ENCODE measurements at regions of chr20 and their contacts with region 1.

Region 1: GRCh38 chr20:43749734-43750294 is 23.0 kb upstream of the GTSF1L start:
- DNase-seq: peak; percentile 88
- H3K4me3 Mint-ChIP-seq: no peak overlapping the region
- H3K27ac Mint-ChIP-seq: peak overlapping the region; percentile 55
- H3K4me1 Mint-ChIP-seq: peaks cover 42% of the 10 kb centered on the region
- H3K27me3 Mint-ChIP-seq: peaks cover 18% of the 10 kb centered on the region

Region 2: GRCh38 chr20:43238266-43238665 is 511.5 kb before region 1 on chr20:
- CTCF ChIA-PET with region 1: no interaction called
- POLR2A ChIA-PET with region 1: no interaction called
- intact Hi-C with region 1: no loop called
- DNase-seq: no peak
- H3K4me3 Mint-ChIP-seq: no peak overlapping the region
- H3K27ac Mint-ChIP-seq: no peak overlapping the region
- H3K4me1 Mint-ChIP-seq: no peaks in the 10 kb centered on the region
- H3K27me3 Mint-ChIP-seq: no peaks in the 10 kb centered on the region

Region 3: GRCh38 chr20:43789593-43789992 is 39.8 kb after region 1 on chr20:
- CTCF ChIA-PET with region 1: interaction called, 7 read pairs
- POLR2A ChIA-PET with region 1: no interaction called
- intact Hi-C with region 1: loop called (anchors 1 kb)
- DNase-seq: no peak
- H3K4me3 Mint-ChIP-seq: no peak overlapping the region
- H3K27ac Mint-ChIP-seq: no peak overlapping the region
- H3K4me1 Mint-ChIP-seq: peaks cover 10% of the 10 kb centered on the region
- H3K27me3 Mint-ChIP-seq: peaks cover 2% of the 10 kb centered on the region

Region 4: DNA sequence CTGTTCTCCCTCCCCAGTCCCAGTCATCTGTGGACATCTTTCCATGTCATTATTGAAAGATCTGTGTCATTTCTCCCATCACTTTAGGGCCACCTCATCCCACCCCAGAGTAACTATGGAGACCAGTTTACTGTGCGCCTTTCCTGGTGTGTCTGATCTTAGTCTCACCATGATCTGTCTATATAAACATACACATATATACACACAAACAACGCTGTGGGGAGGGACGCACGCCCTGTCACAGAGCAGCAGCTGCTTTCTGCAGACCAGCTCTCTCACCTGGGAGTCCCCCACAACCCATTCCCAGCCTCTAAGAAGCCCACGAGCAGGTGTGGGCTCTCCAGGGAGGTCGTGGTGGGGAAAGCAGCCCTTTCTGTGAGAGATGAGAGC is 96.7 kb after region 1 on chr20:
- CTCF ChIA-PET with region 1: interaction called, 65 read pairs
- POLR2A ChIA-PET with region 1: interaction called, 5 read pairs
- intact Hi-C with region 1: loop called (anchors 1 kb)
- DNase-seq: peak; percentile 27
- H3K4me3 Mint-ChIP-seq: no peak overlapping the region
- H3K27ac Mint-ChIP-seq: no peak overlapping the region
- H3K4me1 Mint-ChIP-seq: peaks cover 17% of the 10 kb centered on the region
- H3K27me3 Mint-ChIP-seq: peaks cover 5% of the 10 kb centered on the region

Region 5: DNA sequence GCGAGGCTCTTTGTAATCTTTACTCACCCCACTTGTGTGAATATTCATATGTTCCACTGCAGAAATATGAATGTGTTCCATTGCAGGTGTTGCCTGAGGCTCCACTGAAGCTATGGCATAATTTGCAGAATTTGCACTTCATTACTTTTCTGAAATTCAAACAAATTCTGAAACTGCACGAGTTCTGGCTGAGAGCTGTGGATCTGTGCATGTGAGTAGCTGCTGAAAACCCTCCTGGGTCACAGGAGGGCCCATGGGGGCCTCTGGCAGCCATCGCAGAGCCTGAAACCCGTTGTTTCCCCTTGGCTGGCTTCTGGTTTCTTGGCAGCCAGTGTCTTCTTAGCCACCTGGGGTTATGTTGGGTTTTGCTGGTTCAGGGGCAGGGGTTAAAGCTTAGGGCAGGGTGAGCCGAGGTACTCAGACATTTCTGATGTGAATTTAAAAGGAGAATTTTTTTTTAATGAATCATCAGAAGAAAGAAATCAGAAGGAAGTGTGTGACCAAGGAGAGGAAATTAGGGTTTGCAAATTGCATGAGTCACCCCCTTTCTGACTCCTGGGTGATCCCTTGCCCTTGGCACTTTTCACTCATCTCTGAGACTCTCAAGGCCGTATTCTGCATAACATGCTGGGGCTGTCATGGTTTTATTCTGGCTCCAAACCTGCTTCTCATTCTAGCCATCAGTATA is 205.4 kb after region 1 on chr20:
- CTCF ChIA-PET with region 1: interaction called, 5 read pairs
- POLR2A ChIA-PET with region 1: interaction called, 9 read pairs
- intact Hi-C with region 1: loop called (anchors 1 kb)
- DNase-seq: peak; percentile 73
- H3K4me3 Mint-ChIP-seq: peak overlapping the region; percentile 30
- H3K27ac Mint-ChIP-seq: peak overlapping the region; percentile 72
- H3K4me1 Mint-ChIP-seq: peaks cover 76% of the 10 kb centered on the region
- H3K27me3 Mint-ChIP-seq: peaks cover 37% of the 10 kb centered on the region

Region 6: DNA sequence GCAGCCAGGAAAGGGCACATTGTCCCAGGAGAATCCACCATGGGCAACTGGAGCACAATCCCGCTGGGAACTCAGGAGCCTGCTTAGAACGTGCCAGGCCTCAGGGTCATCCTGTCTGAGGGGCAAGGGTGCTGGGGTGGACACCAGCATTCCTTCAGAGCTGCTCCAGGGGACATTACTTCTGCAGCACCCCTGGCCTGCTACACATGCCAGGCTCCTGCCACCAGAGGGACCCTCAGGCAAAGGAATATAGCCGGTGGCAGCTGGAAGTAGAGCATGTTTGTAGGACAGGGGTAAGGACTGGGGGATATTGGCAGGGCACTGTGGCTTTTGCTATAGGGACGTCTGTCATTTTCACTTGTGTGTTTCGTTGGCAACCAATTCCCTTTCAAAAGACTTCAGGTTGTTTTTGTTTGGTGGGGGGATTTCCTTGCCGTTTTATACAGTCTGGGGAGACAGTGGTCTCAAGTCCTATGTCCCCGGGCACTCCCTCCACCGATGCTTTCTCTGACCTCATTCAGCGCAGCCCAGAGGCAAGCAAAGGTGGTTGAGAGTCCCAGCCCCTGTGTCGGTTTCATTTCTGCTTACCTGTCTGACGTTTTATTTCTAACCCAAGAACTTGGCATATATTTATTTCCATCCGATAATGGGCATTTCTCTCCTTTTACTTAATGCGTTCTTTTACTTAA is 306.3 kb after region 1 on chr20:
- CTCF ChIA-PET with region 1: interaction called, 11 read pairs
- POLR2A ChIA-PET with region 1: no interaction called
- intact Hi-C with region 1: no loop called
- DNase-seq: peak; percentile 58
- H3K4me3 Mint-ChIP-seq: no peak overlapping the region
- H3K27ac Mint-ChIP-seq: no peak overlapping the region
- H3K4me1 Mint-ChIP-seq: peaks cover 7% of the 10 kb centered on the region
- H3K27me3 Mint-ChIP-seq: no peaks in the 10 kb centered on the region

Region 7: DNA sequence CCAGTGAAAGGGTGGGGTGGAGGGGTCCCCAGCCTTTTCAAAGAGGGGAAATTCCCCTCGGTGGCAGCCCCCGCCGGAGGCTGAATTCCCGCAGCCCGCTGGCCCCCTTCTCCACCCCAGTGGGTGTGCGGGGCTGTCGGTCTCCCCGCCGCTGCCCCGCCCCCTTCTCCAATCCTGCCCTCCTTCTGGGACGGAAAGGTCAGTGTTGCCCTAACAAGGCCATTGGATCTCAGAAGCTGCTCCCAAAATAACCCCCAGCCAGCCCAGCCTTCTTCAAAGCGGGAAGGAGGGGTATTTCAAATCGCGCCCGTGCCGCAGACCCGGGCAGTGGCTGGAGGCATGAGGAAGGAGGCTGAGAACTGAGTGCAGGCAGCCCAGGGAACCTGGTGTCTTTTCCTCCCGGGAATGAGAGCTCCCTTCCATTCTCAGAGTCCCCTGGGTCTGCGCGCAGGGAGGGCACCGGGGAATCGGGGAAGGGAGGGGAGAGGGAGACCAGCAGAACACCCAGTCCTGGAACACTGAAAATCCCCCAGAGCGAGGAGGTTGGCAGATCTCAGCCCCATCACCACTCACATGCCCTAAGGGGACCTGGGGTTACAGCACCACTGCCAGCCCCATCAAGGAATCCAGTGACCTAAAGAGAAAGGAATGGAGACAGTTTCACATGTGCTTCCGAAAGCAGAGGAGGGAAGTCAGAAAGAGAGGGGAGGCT is 437.4 kb after region 1 on chr20 and contains the start of gene JPH2:
- CTCF ChIA-PET with region 1: interaction called, 10 read pairs
- POLR2A ChIA-PET with region 1: no interaction called
- intact Hi-C with region 1: loop called (anchors 10 kb)
- DNase-seq: no peak
- H3K4me3 Mint-ChIP-seq: no peak within 1 kb of the TSS
- H3K27ac Mint-ChIP-seq: no peak within 1 kb of the TSS
- H3K4me1 Mint-ChIP-seq: peaks cover 6% of the 10 kb centered on the region
- H3K27me3 Mint-ChIP-seq: peaks cover 48% of the 10 kb centered on the region
- total RNA-seq, gene JPH2: not detected

Measured in activated CD4-positive, alpha-beta memory T cell treated with anti-CD3 and anti-CD28 coated beads for 36 hours (primary cell).